MCF 10A (cell line): ENCODE measurements at regions of chr15 and their contacts with region 1.

Region 1: DNA sequence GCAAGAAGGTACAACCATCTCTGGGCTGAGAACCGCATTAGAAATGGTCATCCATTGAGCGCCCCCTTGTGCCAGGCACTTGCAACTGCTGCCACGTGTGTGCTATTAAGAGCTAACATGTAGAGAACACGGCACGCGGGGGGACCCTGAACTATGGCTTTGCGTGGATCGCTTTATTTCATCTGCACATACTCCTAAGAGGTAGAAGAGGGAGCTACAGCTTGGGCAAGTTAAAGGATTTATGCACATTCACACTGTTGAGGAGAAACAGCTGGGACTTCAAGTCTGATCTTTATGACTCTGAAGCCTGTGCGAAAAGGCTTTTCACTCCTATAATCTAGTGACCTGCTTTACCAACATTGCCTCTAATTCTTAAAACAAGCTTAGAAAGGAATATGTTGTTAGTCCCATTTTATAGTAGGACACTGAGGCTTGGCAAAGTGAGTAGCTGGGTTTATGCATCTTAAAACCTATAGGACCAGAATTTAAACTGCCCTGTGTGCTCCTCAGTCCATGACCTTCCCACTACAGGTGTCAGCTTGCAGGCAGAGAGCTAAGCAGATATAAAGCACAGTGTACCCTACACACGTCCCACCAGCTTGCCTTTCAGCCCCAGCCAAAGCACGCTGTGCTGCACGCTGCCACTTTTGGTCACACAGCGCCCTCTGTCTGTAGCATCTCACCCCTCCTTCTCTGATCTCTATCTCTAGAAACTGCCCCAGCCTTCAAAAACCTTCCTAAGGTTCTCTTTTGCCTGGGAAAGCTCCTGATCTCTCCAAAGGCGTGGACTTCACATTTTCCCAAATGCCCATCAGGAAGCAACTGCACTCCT is 57.8 kb downstream of the STARD5 start:
- DNase-seq: peak; percentile 82
- H3K4me3 Mint-ChIP-seq: peak overlapping the region; percentile 37
- H3K27ac Mint-ChIP-seq: no peak overlapping the region
- H3K4me1 Mint-ChIP-seq: peaks cover 9% of the 10 kb centered on the region
- H3K27me3 Mint-ChIP-seq: no peaks in the 10 kb centered on the region
- CTCF ChIP-seq: peak; percentile 85

Region 2: GRCh38 chr15:80455668-80456442 is 810.3 kb before region 1 on chr15:
- CTCF ChIA-PET with region 1: interaction called, 18 read pairs
- POLR2A ChIA-PET with region 1: no interaction called
- intact Hi-C with region 1: loop called (anchors 5 kb)
- DNase-seq: peak; percentile 77
- H3K4me3 Mint-ChIP-seq: no peak overlapping the region
- H3K27ac Mint-ChIP-seq: no peak overlapping the region
- H3K4me1 Mint-ChIP-seq: peaks cover 13% of the 10 kb centered on the region
- H3K27me3 Mint-ChIP-seq: no peaks in the 10 kb centered on the region
- CTCF ChIP-seq: peak; percentile 77

Region 3: DNA sequence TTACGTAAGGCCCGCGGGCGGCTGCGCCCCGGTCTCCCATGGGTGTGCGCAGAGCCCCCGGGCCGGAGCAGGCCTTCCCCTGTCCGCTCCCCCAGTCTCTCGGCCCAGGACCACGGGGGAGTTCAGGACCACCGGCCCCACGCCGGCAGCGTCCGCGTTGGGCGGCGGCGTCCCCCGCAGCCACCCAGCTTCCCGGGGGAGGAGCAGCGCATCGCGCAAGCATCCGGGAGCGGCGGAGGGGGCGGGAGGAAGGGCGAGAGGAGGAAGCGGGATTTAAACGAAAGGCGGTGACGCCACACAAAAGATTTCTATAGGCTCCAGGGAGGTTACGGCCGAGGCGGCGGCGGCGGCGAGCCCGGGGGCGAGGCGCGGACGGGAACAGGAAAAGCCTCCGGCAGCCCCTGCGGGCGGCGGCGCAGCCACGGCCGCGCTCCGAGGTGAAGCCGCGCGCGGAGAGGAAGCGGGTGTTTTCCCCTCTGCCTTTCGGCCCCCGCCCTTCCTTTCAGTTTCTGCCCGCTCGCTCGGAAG is 265.5 kb before region 1 on chr15 and contains the start of gene TLNRD1:
- CTCF ChIA-PET with region 1: interaction called, 12 read pairs
- POLR2A ChIA-PET with region 1: no interaction called
- intact Hi-C with region 1: loop called (anchors 2 kb)
- DNase-seq: peak; percentile 91
- H3K4me3 Mint-ChIP-seq: peak within 1 kb of the TSS; percentile 82
- H3K27ac Mint-ChIP-seq: peak within 1 kb of the TSS; percentile 64
- H3K4me1 Mint-ChIP-seq: peaks cover 25% of the 10 kb centered on the region
- H3K27me3 Mint-ChIP-seq: no peaks in the 10 kb centered on the region
- CTCF ChIP-seq: no peak
- total RNA-seq, gene TLNRD1: 17.1 and 18.3 TPM in 2 replicates

Region 4: GRCh38 chr15:81117136-81117535 is 149.0 kb before region 1 on chr15:
- CTCF ChIA-PET with region 1: interaction called, 459 read pairs
- POLR2A ChIA-PET with region 1: interaction called, 3 read pairs
- intact Hi-C with region 1: no loop called
- DNase-seq: peak; percentile 30
- H3K4me3 Mint-ChIP-seq: no peak overlapping the region
- H3K27ac Mint-ChIP-seq: peak overlapping the region; percentile 87
- H3K4me1 Mint-ChIP-seq: peaks cover 23% of the 10 kb centered on the region
- H3K27me3 Mint-ChIP-seq: no peaks in the 10 kb centered on the region
- CTCF ChIP-seq: no peak

Region 5: DNA sequence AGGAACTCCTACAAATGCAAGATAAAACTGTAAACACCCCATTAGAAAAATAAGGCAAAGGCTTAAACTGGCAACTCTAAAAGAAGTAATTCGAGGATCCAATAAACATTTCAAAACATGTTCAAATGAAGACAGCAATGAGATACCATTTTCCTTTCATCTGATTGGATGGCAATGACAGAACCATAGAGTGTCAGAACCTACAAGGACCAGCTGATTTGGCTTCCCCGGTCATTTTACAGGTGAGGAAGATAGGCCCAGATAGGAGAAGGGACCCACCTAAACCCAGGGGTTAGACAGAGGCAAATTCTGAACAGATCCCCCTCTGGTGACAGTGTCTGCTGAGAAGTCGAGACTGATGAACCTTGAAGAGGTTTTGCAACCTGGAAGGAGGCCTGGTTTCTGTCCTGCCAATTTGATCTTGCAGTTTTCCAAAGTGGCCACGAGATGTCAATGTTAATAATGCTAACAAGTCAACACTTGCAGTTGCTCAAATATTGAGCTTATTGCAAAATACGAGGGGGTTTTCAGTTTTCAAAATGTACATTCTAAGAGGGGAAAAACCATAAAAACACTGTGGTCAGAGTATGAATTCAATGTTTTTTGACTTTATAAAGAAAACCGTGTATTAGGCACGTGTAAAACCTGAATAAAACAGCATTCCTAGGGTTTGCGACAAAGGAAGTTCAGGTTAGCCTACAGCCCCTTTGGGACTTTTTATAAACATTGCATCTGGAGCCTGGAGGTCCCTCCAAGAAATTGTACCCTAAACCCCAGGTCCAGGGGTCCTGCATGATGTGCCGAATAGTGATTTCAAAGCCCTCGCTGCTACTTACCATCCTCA is 110.6 kb before region 1 on chr15:
- CTCF ChIA-PET with region 1: interaction called, 271 read pairs
- POLR2A ChIA-PET with region 1: interaction called, 6 read pairs
- intact Hi-C with region 1: no loop called
- DNase-seq: peak; percentile 76
- H3K4me3 Mint-ChIP-seq: no peak overlapping the region
- H3K27ac Mint-ChIP-seq: no peak overlapping the region
- H3K4me1 Mint-ChIP-seq: peaks cover 32% of the 10 kb centered on the region
- H3K27me3 Mint-ChIP-seq: no peaks in the 10 kb centered on the region
- CTCF ChIP-seq: peak; percentile 70

Region 6: GRCh38 chr15:81284256-81285031 is 18.3 kb after region 1 on chr15:
- CTCF ChIA-PET with region 1: interaction called, 36 read pairs
- POLR2A ChIA-PET with region 1: no interaction called
- intact Hi-C with region 1: no loop called
- DNase-seq: no peak
- H3K4me3 Mint-ChIP-seq: no peak overlapping the region
- H3K27ac Mint-ChIP-seq: no peak overlapping the region
- H3K4me1 Mint-ChIP-seq: peaks cover 24% of the 10 kb centered on the region
- H3K27me3 Mint-ChIP-seq: peaks cover 17% of the 10 kb centered on the region
- CTCF ChIP-seq: no peak

Region 7: DNA sequence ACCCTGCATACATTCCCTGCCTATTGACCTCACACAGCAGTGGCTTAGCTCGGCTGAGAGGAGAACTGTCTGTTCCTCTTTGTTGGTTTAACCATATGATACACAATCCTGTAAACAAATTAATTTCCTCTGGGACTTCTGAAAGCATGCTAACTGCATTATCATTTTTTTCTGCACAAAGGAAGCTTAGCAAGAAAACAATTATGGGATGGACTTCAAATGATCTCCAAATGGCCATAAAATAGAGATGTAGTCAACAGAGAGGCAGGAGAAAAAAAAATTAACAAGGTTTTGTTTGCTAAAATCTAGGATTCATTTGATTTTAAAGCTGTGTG is 122.2 kb after region 1 on chr15:
- CTCF ChIA-PET with region 1: interaction called, 18 read pairs
- POLR2A ChIA-PET with region 1: no interaction called
- intact Hi-C with region 1: no loop called
- DNase-seq: no peak
- H3K4me3 Mint-ChIP-seq: no peak overlapping the region
- H3K27ac Mint-ChIP-seq: no peak overlapping the region
- H3K4me1 Mint-ChIP-seq: no peaks in the 10 kb centered on the region
- H3K27me3 Mint-ChIP-seq: no peaks in the 10 kb centered on the region
- CTCF ChIP-seq: no peak

Region 8: DNA sequence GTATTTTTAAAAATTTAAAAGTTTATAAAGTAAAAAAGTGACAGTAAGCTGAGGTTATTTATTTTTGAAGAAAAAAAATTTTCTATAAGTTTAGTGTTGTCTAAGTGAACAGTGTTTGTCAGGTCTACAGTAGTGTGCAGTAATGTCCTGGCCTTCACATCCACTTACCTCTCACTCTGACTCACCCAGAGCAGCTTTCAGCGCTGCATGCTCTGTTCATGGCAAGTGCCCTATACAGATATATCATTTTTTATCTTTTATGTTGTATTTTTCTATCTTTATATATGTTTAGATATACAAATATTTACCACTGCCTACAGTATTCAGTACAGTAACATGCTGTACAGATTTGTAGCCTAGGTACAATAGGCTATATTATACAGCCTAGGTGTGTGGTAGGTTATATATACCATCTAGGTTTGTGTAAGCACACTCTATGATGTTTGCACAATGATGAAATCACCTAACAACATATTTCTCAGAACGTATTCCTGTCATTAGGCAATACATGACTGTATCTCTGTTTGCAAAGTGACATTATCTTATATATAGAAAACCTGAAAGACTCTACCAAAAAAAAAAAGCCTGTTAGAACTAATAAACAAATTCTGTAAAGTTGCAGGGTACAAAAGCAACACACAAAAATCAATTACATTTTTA is 183.8 kb after region 1 on chr15:
- CTCF ChIA-PET with region 1: no interaction called
- POLR2A ChIA-PET with region 1: no interaction called
- intact Hi-C with region 1: no loop called
- DNase-seq: no peak
- H3K4me3 Mint-ChIP-seq: no peak overlapping the region
- H3K27ac Mint-ChIP-seq: no peak overlapping the region
- H3K4me1 Mint-ChIP-seq: peaks cover 6% of the 10 kb centered on the region
- H3K27me3 Mint-ChIP-seq: no peaks in the 10 kb centered on the region
- CTCF ChIP-seq: no peak